ENCODE measurements at regions of chr16 and their contacts with region 1.

Region 1: GRCh38 chr16:68146585-68146984 is 61.4 kb downstream of the NFATC3 start:
- DNase-seq: no peak
- ATAC-seq: peak; percentile 78 to 90

Region 2: DNA sequence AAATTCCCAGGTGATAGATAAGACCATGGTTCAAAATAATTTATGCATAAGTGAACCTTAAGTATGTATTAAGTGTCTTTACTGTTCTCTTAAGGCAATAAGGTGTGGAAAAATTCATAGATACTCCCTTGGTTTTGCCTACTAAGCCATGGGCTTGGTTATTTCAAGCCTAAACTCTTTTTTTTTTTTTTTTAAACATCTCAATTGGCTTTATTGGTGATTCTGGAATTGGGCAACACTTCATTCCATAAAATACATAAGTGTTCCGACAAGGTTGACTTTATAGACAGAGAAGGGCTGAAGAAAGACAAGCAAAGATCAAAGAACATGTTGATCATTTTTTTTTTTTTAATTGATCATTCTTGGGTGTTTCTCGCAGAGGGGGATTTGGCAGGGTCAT is 15.8 kb after region 1 on chr16:
- intact Hi-C with region 1: loop called in 1 of 2 experiments (anchors 1 kb)
- DNase-seq: no peak
- ATAC-seq: no peak

Measured in left cardiac atrium (tissue), 4 donors.